Heart right ventricle (tissue), 16 donors: ENCODE measurements at regions of chr18 and their contacts with region 1.

Region 1: DNA sequence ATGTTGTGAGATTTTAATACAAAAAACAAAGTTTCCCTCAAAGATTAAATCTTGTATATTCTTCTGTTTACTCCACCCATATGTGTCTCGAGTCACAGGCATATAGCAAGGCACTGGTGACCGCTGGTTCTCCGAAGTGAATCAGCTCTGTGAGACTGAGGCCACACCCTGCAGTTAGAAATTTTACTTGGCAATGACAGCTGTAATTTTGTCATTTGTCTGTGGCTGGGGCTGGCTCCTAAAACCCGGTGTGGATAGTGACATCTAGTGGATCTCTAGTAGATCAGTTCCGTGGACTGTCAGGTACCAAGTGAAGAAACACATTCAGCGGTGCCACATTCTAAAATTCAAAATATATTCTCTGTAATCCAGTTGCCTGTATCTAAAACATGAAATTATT is 278.0 kb downstream of the NEDD4L start:
- DNase-seq: peak; percentile 35 to 79
- ATAC-seq: peak; percentile 90 to 97 (median 94)
- H3K4me3 ChIP-seq: peak overlapping the region in 4 of 10 donors; percentile 8 to 22 (median 14)
- H3K27ac ChIP-seq: peak overlapping the region in 8 of 10 donors; percentile 32 to 61 (median 47)
- H3K4me1 ChIP-seq: peaks cover 0 to 28% (median 14%) of the 10 kb centered on the region in 9 donors
- H3K27me3 ChIP-seq: no peaks in the 10 kb centered on the region
- CTCF ChIP-seq: peak; percentile 38 to 80 (median 61)

Region 2: DNA sequence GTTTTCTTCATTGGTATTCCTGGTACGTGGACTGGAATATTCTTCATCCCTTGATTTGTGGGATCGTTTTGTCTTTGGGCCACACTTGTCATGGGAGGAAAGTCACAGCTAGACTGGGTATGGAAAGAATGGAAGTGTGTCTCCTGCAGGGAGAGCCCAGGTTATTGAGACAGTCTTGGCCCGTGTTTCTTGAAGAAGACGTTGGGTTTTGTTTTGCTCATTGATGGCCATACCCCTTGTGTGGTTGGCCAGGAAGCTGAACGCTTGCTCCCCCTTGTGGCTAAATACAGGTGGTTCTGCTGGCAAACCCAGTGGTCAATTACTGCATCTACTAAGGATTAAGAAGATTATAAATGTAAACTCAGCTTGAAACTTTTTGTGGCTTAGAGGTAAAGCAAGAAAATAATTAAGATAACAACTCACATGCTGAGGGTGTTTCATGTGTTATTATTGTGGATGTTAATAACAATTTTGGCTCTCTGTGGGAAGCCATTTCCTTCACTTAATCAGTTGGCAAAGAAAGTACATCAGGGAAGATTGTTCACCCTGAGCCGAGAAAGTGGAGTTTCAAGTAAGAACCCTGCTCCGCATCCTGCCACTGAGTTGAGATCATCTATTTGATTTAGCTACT is 186.2 kb before region 1 on chr18:
- intact Hi-C with region 1: loop called in 3 of 10 experiments (anchors 5 kb)
- DNase-seq: peak in 1 of 2 donors; percentile 42
- ATAC-seq: peak; percentile 47 to 83 (median 64)
- H3K4me3 ChIP-seq: no peak overlapping the region
- H3K27ac ChIP-seq: no peak overlapping the region
- H3K4me1 ChIP-seq: peaks cover 0 to 8% (median 0%) of the 10 kb centered on the region in 9 donors
- H3K27me3 ChIP-seq: no peaks in the 10 kb centered on the region
- CTCF ChIP-seq: peak; percentile 57 to 87 (median 78)

Region 3: DNA sequence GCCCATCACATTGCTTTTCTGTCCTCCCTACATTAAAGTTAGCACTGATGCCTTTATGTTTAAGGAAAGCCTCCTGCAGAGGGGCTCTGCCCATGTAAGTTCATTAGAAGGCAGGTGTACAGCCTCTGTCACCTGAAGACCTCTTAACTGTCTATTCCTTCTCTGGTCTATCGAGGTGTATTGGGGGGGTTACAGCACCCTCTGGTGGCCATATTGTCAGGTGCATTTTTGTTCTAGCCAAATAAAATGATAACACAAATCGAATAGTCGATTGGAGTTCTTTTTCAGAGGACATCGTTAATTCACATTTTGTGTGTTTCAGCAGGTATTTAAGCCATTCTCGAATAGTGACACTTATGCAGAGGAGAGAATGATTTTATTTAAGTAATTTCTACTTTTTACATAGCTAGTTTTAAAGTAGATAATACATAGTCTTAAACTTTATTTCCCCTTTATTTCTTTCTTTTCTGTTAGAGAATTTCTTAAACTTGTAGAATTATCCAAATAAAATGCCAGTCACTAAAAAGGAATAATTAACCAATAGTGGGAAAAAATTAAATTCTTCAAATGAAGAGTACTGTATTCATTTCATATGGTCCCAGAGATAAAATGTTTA is 141.1 kb before region 1 on chr18:
- intact Hi-C with region 1: loop called in 4 of 10 experiments (anchors 5 to 10 kb)
- DNase-seq: peak in 1 of 2 donors; percentile 25
- ATAC-seq: no peak
- H3K4me3 ChIP-seq: no peak overlapping the region
- H3K27ac ChIP-seq: no peak overlapping the region
- H3K4me1 ChIP-seq: peaks cover 0 to 7% (median 0%) of the 10 kb centered on the region in 9 donors
- H3K27me3 ChIP-seq: no peaks in the 10 kb centered on the region
- CTCF ChIP-seq: peak; percentile 74 to 94 (median 88)

Region 4: DNA sequence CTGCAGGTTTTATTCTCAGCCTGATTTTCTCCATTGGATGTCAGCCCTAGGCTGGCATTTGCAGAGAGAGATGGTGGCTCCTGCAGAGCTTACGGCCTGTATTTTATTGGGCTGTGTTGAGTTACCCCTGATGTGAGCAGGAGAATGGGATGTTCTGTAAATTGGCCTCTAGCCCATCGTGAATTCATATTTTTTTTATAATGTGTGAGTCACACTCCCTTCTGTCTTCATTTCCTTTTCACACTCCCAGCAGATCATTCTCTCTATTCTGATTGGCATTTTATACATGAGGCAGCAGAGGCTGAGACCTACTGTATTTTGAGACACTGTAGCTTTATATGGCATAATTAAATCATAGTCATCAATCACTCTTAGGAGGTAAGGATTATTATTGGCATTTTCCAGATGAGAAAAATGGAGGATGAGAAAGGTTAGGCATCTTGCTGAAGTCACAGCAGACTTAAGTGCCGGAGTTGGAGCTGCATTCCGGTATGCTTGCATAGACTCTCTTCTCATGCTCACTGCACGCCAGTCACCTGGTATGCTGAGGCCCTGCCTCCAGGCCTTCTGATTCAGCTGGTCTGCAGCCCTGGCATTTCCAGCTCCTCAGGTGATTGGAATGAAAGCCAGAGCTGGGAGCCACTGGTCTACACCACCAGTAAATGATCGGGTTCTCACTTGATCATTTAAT is 135.6 kb before region 1 on chr18:
- intact Hi-C with region 1: loop called in 7 of 10 experiments (anchors 5 to 10 kb)
- DNase-seq: peak in 1 of 2 donors; percentile 21
- ATAC-seq: peak in 3 of 8 donors; percentile 15 to 45 (median 45)
- H3K4me3 ChIP-seq: no peak overlapping the region
- H3K27ac ChIP-seq: no peak overlapping the region
- H3K4me1 ChIP-seq: peaks cover 0 to 23% (median 0%) of the 10 kb centered on the region in 9 donors
- H3K27me3 ChIP-seq: no peaks in the 10 kb centered on the region
- CTCF ChIP-seq: no peak

Region 5: DNA sequence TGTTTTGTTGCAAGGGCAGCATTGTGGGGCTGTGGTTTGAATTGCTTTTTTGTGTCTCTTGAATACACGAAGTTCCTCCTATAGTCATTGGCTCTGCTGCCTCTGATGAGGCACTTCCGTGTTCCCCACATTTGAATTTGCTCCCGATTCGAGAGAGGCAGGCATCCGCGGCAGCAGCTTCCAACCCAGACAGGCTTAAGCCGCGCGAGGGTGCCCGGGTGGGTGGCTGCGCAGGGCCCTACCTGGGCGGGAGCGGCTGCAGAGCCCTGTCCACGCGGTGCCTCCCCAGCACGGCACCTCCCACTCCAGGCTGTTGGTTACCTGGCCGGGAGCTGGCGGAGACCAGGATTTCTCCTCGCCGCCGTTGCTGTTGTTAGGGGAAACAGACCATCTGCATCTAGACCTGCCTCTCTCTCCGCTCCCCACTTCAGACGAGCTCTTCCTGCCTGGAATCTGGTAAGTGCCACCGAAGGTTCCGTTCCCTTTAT is 126.7 kb before region 1 on chr18:
- intact Hi-C with region 1: loop called in 6 of 10 experiments (anchors 2 to 10 kb)
- DNase-seq: no peak
- ATAC-seq: peak; percentile 12 to 52 (median 38)
- H3K4me3 ChIP-seq: peak overlapping the region in 9 of 10 donors; percentile 18 to 55 (median 51)
- H3K27ac ChIP-seq: peak overlapping the region in 3 of 10 donors; percentile 17 to 33 (median 29)
- H3K4me1 ChIP-seq: peaks cover 0 to 30% (median 9%) of the 10 kb centered on the region in 9 donors
- H3K27me3 ChIP-seq: peaks cover 0 to 23% (median 0%) of the 10 kb centered on the region in 7 donors
- CTCF ChIP-seq: no peak

Region 6: GRCh38 chr18:58257461-58257860 is 64.5 kb before region 1 on chr18:
- intact Hi-C with region 1: loop called in 5 of 10 experiments (anchors 5 to 10 kb)
- DNase-seq: no peak
- ATAC-seq: peak in 7 of 8 donors; percentile 3 to 28 (median 17)
- H3K4me3 ChIP-seq: peak overlapping the region; percentile 36 to 56 (median 50)
- H3K27ac ChIP-seq: peak overlapping the region; percentile 24 to 85 (median 82)
- H3K4me1 ChIP-seq: peaks cover 0 to 19% (median 0%) of the 10 kb centered on the region in 9 donors
- H3K27me3 ChIP-seq: no peaks in the 10 kb centered on the region
- CTCF ChIP-seq: no peak

Region 7: DNA sequence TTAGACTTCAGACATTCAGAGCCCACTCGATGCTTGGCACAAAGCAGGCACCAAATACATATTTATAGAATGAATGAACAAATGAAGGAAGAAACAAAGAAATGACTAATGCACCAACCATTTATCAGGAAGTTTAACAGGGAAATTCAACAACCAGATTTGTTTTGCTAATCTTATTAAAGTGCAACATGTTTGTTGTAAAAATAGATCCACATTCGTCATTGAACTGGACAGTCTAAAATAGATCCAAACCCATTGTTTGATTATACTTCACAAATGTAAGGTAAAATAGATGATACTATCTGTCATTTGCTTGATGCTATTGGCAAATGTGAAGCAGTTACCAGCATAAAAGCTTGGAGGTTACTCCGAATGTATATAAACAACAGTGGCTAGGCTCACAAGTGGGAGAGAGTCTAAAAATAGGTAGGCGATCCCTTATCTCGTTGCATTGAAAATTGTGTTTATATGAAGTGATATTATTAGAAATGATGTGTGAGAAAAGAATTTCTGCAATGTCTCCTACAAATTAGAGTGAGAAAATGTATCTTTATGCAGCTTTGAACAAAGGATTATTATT is 31.8 kb before region 1 on chr18:
- intact Hi-C with region 1: loop called in 1 of 10 experiments (anchors 2 kb)
- DNase-seq: no peak
- ATAC-seq: peak in 4 of 8 donors; percentile 21 to 68 (median 56)
- H3K4me3 ChIP-seq: no peak overlapping the region
- H3K27ac ChIP-seq: peak overlapping the region; percentile 26 to 76 (median 54)
- H3K4me1 ChIP-seq: peaks cover 0 to 70% (median 43%) of the 10 kb centered on the region in 9 donors
- H3K27me3 ChIP-seq: no peaks in the 10 kb centered on the region
- CTCF ChIP-seq: no peak

Region 8: GRCh38 chr18:58426611-58427010 is 104.6 kb after region 1 on chr18:
- intact Hi-C with region 1: no loop called
- DNase-seq: no peak
- ATAC-seq: no peak
- H3K4me3 ChIP-seq: no peak overlapping the region
- H3K27ac ChIP-seq: no peak overlapping the region
- H3K4me1 ChIP-seq: no peaks in the 10 kb centered on the region
- H3K27me3 ChIP-seq: peaks cover 0 to 3% (median 0%) of the 10 kb centered on the region in 7 donors
- CTCF ChIP-seq: no peak